PC-3 (cell line): ENCODE measurements at regions of chr17 and their contacts with region 1.

Region 1: DNA sequence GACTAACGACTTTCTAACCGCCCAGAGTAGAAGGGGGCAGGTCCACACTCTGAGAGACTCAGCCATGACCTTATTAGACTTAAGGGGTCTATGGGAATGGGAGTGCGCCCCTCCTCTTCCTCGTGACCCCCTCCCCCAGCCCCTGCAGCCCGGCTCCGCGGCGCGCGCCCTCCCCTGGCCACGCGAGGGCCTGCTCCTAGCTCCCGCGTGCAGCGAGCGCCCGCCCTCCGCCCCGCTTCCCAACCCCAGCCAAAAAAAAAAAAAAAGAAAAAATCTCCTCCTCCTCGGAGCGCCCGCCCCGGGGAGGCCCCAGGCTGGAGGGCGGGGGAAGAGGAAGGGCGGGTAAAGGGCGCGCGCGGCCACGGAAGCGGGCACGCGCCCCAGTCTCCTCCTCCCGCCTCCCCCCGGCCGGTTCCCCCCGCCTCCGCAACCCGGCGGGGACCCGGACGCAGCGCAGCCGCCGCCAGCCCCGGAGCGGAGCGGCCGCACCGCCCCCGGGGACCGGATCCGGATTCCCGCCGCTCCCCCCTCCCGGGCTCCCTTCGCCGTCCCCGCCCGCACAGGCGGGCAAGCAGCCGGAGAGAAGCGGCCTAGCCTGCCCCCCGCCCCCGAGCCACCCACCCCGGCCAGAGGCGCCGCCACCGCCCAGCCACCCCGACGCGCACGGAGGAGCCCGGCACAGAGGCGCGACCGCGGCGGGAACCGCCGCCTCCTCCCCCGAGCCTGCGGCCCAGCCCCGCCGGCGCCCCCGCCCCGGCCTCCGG is 949 bp downstream of the UBTF start:
- DNase-seq: peak; percentile 97
- ATAC-seq: peak; percentile 10
- H3K4me3 ChIP-seq: peak overlapping the region; percentile 73
- H3K27ac ChIP-seq: peak overlapping the region; percentile 71
- H3K4me1 ChIP-seq: peaks cover 32% of the 10 kb centered on the region
- H3K27me3 ChIP-seq: no peaks in the 10 kb centered on the region
- CTCF ChIP-seq: peak; percentile 76

Region 2: GRCh38 chr17:44314869-44315661 is 96.5 kb after region 1 on chr17:
- CTCF ChIA-PET with region 1: interaction called, 4 read pairs
- POLR2A ChIA-PET with region 1: interaction called, 20 read pairs
- intact Hi-C with region 1: no loop called
- DNase-seq: peak; percentile 75
- ATAC-seq: peak; percentile 75
- H3K4me3 ChIP-seq: peak overlapping the region; percentile 77
- H3K27ac ChIP-seq: no peak overlapping the region
- H3K4me1 ChIP-seq: peaks cover 11% of the 10 kb centered on the region
- H3K27me3 ChIP-seq: no peaks in the 10 kb centered on the region
- CTCF ChIP-seq: no peak

Region 3: GRCh38 chr17:44324571-44325275 is 106.2 kb after region 1 on chr17 and contains the start of gene SLC25A39:
- CTCF ChIA-PET with region 1: interaction called, 7 read pairs
- POLR2A ChIA-PET with region 1: interaction called, 12 read pairs
- intact Hi-C with region 1: loop called (anchors 1 kb)
- DNase-seq: peak; percentile 98
- ATAC-seq: peak; percentile 74
- H3K4me3 ChIP-seq: peak within 1 kb of the TSS; percentile 81
- H3K27ac ChIP-seq: peak within 1 kb of the TSS; percentile 51
- H3K4me1 ChIP-seq: peaks cover 8% of the 10 kb centered on the region; the same call in 1 of the 2 replicates
- H3K27me3 ChIP-seq: no peaks in the 10 kb centered on the region
- CTCF ChIP-seq: no peak
- total RNA-seq, gene SLC25A39: 726 and 797 TPM in 2 replicates